B cell (primary cell): ENCODE measurements at regions of chr16 and their contacts with region 1.

Region 1: DNA sequence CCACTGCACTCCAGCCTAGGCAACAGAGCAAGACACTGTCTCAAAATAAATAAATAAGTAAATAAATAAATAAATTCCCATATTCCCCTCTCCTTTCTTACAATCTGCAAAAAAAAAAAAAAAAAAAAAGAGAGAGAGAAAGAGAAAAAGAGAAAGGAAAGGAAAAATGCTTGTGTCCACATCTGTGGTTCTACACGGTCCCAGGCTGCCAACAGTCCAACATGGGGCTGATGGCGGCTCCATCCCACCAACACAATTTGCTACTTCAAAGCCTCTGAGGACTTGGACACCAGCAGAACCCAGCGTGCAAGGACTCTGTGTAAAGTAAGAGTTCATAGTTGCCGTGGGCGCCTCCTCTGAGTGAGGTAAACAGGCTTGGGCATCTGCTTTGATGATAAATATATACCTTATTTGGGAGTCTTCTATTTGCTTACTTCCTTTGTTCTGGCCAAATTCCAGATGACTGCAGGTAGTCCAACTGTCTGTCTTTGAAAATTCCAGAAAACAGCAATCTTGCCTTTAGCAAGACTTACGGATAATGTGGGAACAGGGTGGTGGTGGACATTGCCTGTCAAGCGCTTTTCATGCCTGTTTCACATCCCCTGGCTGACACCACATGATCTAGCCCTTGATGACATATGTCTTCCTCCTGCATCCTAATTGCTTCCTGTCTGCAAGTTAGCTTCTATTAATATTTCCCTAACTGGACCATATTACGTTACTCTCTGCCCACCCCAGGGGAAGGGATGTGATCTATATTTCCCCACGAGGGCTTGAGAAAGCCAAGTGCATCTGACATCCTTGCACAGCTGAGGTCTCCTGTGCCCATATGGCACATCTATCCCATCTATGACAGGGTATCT is 10.1 kb downstream of the LITAF start:
- DNase-seq: peak; percentile 85
- ATAC-seq: peak; percentile 66
- H3K4me3 ChIP-seq: peak overlapping the region in 1 of 5 experiments; percentile 15
- H3K4me3 Mint-ChIP-seq: peak overlapping the region; percentile 86
- H3K27ac ChIP-seq: peak overlapping the region in 1 of 2 donors; percentile 65
- H3K27ac Mint-ChIP-seq: peak overlapping the region; percentile 89
- H3K4me1 ChIP-seq: peaks cover 65 to 82% of the 10 kb centered on the region in 2 donors
- H3K4me1 Mint-ChIP-seq: peaks cover 79% of the 10 kb centered on the region
- H3K27me3 ChIP-seq: no peaks in the 10 kb centered on the region
- H3K27me3 Mint-ChIP-seq: no peaks in the 10 kb centered on the region
- CTCF ChIP-seq: no peak

Region 2: GRCh38 chr16:11726008-11726407 is 149.3 kb after region 1 on chr16:
- CTCF ChIA-PET with region 1: no interaction called
- POLR2A ChIA-PET with region 1: interaction called, 12 read pairs
- intact Hi-C with region 1: no loop called
- DNase-seq: no peak
- ATAC-seq: no peak
- H3K4me3 ChIP-seq: no peak overlapping the region
- H3K4me3 Mint-ChIP-seq: no peak overlapping the region
- H3K27ac ChIP-seq: no peak overlapping the region
- H3K27ac Mint-ChIP-seq: no peak overlapping the region
- H3K4me1 ChIP-seq: no peaks in the 10 kb centered on the region
- H3K4me1 Mint-ChIP-seq: peaks cover 12% of the 10 kb centered on the region
- H3K27me3 ChIP-seq: no peaks in the 10 kb centered on the region
- H3K27me3 Mint-ChIP-seq: no peaks in the 10 kb centered on the region
- CTCF ChIP-seq: no peak